Calu3 (cell line): ENCODE measurements at regions of chr6 and their contacts with region 1.

Region 1: GRCh38 chr6:30781743-30782424 is 37.5 kb upstream of the IER3 start:
- DNase-seq: peak; percentile 100
- H3K4me3 Mint-ChIP-seq: peak overlapping the region; percentile 45
- H3K27ac Mint-ChIP-seq: peak overlapping the region; percentile 97
- H3K4me1 Mint-ChIP-seq: peaks cover 68% of the 10 kb centered on the region
- H3K27me3 Mint-ChIP-seq: no peaks in the 10 kb centered on the region
- CTCF ChIP-seq: no peak

Region 2: DNA sequence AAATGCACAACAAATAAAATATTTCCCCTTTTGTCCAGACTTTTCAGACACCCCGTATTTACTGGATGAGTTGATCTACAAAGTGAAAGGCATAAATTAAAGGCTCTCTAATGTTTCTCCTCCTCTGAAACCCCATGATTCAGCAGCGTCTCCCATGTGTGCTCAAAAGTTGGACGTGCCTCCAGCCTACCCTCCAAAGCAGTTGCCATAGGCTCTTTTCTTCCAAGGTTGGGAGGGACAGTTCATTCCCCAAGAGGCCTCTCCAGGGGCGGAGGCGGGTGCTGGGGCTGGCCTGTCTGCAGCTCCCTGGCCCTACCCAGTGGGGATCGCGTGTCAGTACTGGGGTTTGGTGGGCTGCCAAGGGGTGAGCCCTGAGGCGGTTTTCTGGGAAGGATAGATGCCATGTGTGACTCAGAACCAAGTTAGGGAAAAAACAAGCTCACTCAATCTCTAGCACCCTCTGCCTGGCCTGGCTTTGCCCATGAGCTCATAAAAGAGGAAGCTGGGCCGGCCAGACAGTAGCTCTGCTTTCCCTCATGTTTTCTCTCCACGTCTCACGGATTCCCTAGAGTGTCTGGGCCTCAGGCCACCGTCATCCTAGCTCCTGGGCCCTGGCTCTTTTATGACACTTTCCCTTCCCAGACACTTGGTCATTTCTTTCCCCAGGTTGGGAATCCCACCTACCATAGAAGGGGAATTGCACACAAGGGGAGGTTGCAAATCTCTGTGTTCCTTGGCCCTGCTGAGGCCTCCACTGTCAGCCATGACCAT is 29.5 kb before region 1 on chr6:
- CTCF ChIA-PET with region 1: interaction called, 27 read pairs
- intact Hi-C with region 1: loop called (anchors 2 kb)
- DNase-seq: peak; percentile 100
- H3K4me3 Mint-ChIP-seq: peak overlapping the region; percentile 25
- H3K27ac Mint-ChIP-seq: peak overlapping the region; percentile 95
- H3K4me1 Mint-ChIP-seq: peaks cover 56% of the 10 kb centered on the region
- H3K27me3 Mint-ChIP-seq: no peaks in the 10 kb centered on the region
- CTCF ChIP-seq: no peak

Region 3: GRCh38 chr6:30769088-30769852 is 12.6 kb before region 1 on chr6:
- CTCF ChIA-PET with region 1: interaction called, 21 read pairs
- intact Hi-C with region 1: loop called (anchors 1 kb)
- DNase-seq: peak; percentile 93
- H3K4me3 Mint-ChIP-seq: peak overlapping the region; percentile 53
- H3K27ac Mint-ChIP-seq: peak overlapping the region; percentile 93
- H3K4me1 Mint-ChIP-seq: peaks cover 69% of the 10 kb centered on the region
- H3K27me3 Mint-ChIP-seq: no peaks in the 10 kb centered on the region
- CTCF ChIP-seq: no peak

Region 4: GRCh38 chr6:30821862-30822782 is 40.2 kb after region 1 on chr6:
- CTCF ChIA-PET with region 1: interaction called, 10 read pairs
- intact Hi-C with region 1: loop called (anchors 5 kb)
- DNase-seq: peak; percentile 50
- H3K4me3 Mint-ChIP-seq: no peak overlapping the region
- H3K27ac Mint-ChIP-seq: peak overlapping the region; percentile 43
- H3K4me1 Mint-ChIP-seq: peaks cover 65% of the 10 kb centered on the region
- H3K27me3 Mint-ChIP-seq: no peaks in the 10 kb centered on the region
- CTCF ChIP-seq: peak; percentile 71